Right ventricle myocardium inferior (tissue), 1 donor: ENCODE measurements at regions of chr7 and their contacts with region 1.

Region 1: GRCh38 chr7:134686786-134687185 is 40.1 kb downstream of the BPGM start:
- DNase-seq: no peak
- ATAC-seq: no peak

Region 2: DNA sequence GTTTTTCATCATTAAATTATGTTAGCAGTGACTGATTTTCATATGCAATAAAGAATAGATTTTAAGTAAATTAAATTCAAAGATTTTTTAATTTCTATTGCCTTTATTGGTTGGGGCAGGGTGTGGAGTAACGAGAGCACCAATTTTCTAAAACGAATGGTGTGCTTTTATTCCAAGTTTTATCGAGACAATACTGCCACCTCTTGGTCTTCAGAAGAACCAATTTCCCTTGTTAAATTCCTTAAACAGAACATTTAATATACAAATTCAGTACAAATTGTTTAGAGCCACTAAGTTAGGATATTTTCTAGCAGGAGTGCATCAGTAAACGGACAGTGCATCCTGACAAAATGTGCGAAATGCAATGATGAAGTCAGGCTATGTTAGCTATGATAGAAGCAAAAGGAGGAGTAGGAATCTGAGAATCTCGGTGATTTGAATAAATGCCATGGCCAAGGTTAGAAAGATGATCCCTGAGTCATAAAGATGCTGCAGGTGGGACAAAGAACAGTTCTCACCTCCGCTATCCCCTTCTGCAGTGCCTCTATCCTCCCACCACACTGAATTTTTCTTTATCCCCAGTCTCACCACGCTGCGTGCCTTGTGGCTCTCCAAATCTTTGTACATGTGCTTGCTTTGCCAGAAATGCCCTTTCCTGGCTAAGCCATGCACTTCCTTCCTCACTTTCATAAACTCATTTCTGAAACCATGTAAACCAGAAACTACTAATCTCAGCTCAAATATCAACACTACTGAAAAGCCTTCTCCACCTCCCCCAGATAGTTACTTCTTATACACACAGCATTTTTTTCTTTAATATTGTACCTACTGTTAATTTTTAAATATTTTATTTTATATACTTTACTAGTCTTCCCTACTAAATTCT is 267.7 kb after region 1 on chr7:
- intact Hi-C with region 1: loop called (anchors 2 kb)
- DNase-seq: no peak
- ATAC-seq: peak; percentile 46